ENCODE measurements at regions of chrX and their contacts with region 1.

Region 1: DNA sequence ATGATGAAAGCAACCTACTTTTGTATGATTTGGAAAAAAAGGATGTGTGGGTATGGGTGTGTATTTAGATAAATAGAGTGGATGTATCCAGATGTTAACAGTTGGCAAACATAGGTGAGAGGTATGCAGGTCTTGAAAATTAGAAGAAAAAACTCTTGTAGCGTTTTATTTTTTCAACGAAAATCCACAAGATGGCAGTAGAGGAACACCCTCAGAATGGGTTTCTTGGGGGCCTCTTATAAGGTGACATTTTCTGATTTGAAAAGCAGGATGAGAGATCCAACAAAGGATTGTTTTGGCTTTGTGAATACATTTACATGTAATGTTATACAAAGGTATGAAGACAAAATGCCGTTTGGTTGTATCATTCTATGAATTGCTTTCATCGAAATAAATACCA is 68.3 kb downstream of the FMR1NB start:
- DNase-seq: no peak
- H3K4me3 ChIP-seq: no peak overlapping the region
- CTCF ChIP-seq: peak; percentile 14

Region 2: DNA sequence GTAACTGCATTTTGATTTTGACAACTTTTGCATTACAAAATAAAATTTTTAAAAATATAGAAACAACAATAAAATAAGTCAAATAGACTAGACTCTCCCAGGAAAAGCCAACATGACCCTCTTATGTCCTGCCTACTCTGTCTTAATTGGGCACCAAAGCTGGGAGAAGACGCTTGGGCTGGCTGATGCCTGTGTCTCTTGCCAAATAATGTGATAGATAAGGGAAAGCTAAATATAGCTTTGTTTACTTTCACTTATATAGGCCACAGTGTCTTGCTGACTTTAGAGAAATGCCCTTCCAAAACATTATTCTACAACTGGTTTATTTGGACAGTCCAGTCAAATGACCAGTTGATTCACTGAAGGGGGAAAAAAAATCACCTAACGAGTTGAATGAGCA is 14.1 kb before region 1 on chrX:
- CTCF ChIA-PET with region 1: no interaction called
- POLR2A ChIA-PET with region 1: no interaction called
- DNase-seq: no peak
- H3K4me3 ChIP-seq: no peak overlapping the region
- CTCF ChIP-seq: no peak

Region 3: DNA sequence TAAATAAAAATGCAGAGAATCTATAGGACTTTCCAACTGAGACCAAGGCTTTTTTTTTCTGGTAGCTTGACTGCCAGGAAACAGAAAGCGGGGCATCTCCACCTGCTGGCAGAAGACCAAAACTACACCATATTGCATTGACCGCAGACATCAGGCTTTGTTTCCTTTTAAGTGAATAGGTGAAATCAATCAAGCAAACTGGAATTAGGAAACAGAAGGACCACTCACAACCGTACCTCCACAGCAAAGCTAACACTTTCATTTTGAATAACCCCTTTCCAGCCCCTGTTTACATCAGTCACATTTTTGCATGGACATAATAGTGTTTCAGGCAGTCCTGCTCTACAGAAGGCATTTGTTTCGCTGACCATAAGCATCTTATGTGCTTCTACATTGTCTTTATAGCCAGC is 1237.5 kb after region 1 on chrX:
- CTCF ChIA-PET with region 1: interaction called, 10 read pairs
- POLR2A ChIA-PET with region 1: no interaction called
- DNase-seq: no peak
- H3K4me3 ChIP-seq: no peak overlapping the region
- CTCF ChIP-seq: peak; percentile 49